ENCODE measurements at regions of chr20 and their contacts with region 1.

Region 1: DNA sequence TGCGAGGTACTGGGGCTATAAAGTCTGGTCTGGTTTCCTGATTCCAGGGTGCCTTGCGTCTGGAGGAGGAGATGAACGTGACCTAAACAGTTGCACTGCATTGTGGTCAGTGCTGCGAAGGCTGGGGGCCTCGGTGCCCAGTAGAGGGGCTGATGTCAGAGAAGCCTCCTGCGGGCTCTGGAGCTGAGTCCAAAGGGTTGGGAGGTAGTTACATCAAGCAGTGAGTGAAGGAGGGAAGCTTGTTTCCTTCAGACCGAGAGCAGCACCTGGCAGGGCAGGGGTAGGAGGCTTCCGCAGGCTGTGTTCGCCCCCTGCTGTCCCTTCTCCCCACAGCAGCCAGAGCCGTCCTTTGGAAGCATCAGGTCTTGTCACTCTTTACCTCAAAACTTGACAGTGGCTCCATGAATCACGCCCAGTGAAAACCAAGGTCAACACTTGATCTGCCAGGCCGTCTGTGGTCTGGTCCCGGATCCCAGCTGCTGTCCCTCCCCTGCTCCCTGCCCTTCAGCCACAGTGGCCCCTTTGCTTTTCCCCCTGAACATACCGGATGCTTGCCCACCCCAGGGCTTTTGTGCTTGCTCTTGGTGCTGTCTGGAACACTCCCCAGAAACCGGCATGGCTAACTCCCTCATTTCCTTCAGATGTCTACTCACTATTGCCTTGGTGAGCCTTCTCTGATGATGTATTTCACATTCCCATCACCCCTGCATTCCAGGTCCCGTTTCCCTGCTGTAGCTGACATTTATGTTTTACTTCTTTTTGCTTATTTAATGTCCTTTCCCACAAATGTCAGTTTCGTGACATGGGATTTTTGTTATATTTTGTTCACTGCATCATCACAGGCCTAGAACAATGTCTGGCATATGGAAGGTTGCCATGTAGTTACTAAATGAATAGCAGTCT is 7.0 kb downstream of the DYNLRB1 start:
- DNase-seq: peak; percentile 89 to 93
- H3K4me3 ChIP-seq: no peak overlapping the region
- H3K4me3 Mint-ChIP-seq: no peak overlapping the region
- H3K27ac Mint-ChIP-seq: peak overlapping the region; percentile 25
- H3K4me1 ChIP-seq: peaks cover 46% of the 10 kb centered on the region
- H3K4me1 Mint-ChIP-seq: peaks cover 50% of the 10 kb centered on the region
- H3K27me3 ChIP-seq: no peaks in the 10 kb centered on the region
- H3K27me3 Mint-ChIP-seq: no peaks in the 10 kb centered on the region
- CTCF ChIP-seq: peak; percentile 96 to 99

Region 2: GRCh38 chr20:34200023-34200422 is 323.2 kb before region 1 on chr20:
- CTCF ChIA-PET with region 1: interaction called, 10 read pairs
- POLR2A ChIA-PET with region 1: no interaction called
- intact Hi-C with region 1: no loop called
- DNase-seq: no peak
- H3K4me3 ChIP-seq: no peak overlapping the region
- H3K4me3 Mint-ChIP-seq: no peak overlapping the region
- H3K27ac Mint-ChIP-seq: no peak overlapping the region
- H3K4me1 ChIP-seq: no peaks in the 10 kb centered on the region; the same call in 1 of the 2 replicates
- H3K4me1 Mint-ChIP-seq: no peaks in the 10 kb centered on the region
- H3K27me3 ChIP-seq: no peaks in the 10 kb centered on the region
- H3K27me3 Mint-ChIP-seq: peaks cover 14% of the 10 kb centered on the region
- CTCF ChIP-seq: no peak

Region 3: DNA sequence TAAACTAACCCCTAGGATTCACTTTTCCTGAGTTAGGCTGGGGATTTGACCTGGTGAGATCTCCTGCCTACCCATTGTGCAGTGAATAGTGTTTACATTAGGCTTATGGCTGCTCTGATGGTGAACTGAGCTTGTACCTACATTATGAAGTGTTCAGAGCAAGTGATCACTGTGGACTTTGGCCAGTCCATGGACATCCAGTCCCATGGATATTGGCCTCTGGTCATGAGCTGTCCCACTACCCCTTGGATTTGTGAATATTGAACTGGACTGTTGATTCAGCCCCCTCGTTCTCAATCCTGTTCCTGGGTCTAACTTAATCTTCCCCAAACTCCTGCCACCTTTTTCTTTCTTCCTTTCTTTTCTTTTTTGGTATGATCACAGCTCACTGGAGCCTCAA is 268.2 kb before region 1 on chr20:
- CTCF ChIA-PET with region 1: interaction called, 7 read pairs
- POLR2A ChIA-PET with region 1: no interaction called
- intact Hi-C with region 1: loop called (anchors 1 kb)
- DNase-seq: peak in 1 of 2 experiments; percentile 34
- H3K4me3 ChIP-seq: no peak overlapping the region
- H3K4me3 Mint-ChIP-seq: no peak overlapping the region
- H3K27ac Mint-ChIP-seq: no peak overlapping the region
- H3K4me1 ChIP-seq: peaks cover 19% of the 10 kb centered on the region
- H3K4me1 Mint-ChIP-seq: peaks cover 27% of the 10 kb centered on the region
- H3K27me3 ChIP-seq: no peaks in the 10 kb centered on the region
- H3K27me3 Mint-ChIP-seq: no peaks in the 10 kb centered on the region
- CTCF ChIP-seq: no peak

Region 4: GRCh38 chr20:34302723-34303528 is 220.3 kb before region 1 on chr20 and contains the start of gene AHCY:
- CTCF ChIA-PET with region 1: interaction called, 21 read pairs
- POLR2A ChIA-PET with region 1: no interaction called
- intact Hi-C with region 1: no loop called
- DNase-seq: peak; percentile 100
- H3K4me3 ChIP-seq: peak within 1 kb of the TSS; percentile 73
- H3K4me3 Mint-ChIP-seq: no peak within 1 kb of the TSS
- H3K27ac Mint-ChIP-seq: peak within 1 kb of the TSS; percentile 90
- H3K4me1 ChIP-seq: peaks cover 46% of the 10 kb centered on the region
- H3K4me1 Mint-ChIP-seq: peaks cover 15% of the 10 kb centered on the region
- H3K27me3 ChIP-seq: no peaks in the 10 kb centered on the region
- H3K27me3 Mint-ChIP-seq: no peaks in the 10 kb centered on the region
- CTCF ChIP-seq: no peak
- total RNA-seq, gene AHCY: 665 and 691 TPM in 2 replicates

Region 5: GRCh38 chr20:34473262-34473883 is 49.8 kb before region 1 on chr20:
- CTCF ChIA-PET with region 1: interaction called, 7 read pairs
- POLR2A ChIA-PET with region 1: no interaction called
- intact Hi-C with region 1: loop called (anchors 1 kb)
- DNase-seq: peak; percentile 88 to 93
- H3K4me3 ChIP-seq: no peak overlapping the region
- H3K4me3 Mint-ChIP-seq: no peak overlapping the region
- H3K27ac Mint-ChIP-seq: no peak overlapping the region
- H3K4me1 ChIP-seq: peaks cover 8% of the 10 kb centered on the region; the same call in 1 of the 2 replicates
- H3K4me1 Mint-ChIP-seq: no peaks in the 10 kb centered on the region
- H3K27me3 ChIP-seq: no peaks in the 10 kb centered on the region
- H3K27me3 Mint-ChIP-seq: no peaks in the 10 kb centered on the region
- CTCF ChIP-seq: peak; percentile 88 to 91

Measured in Caco-2 (cell line).